Activated T-helper 1 cell treated with anti-CD3 and anti-CD28 coated beads, Interleukin-12 subunit alpha, Interleukin-12 subunit beta, Interleukin-2, Interleukin-4 antibody, amounts not matched to agents 30 ng/mL and 10 ng/mL and 1 ng/mL, durations not matched to agents 14 hours and 24 hours and 36 hours (primary cell): ENCODE measurements at regions of chr5 and their contacts with region 1.

Region 1: DNA sequence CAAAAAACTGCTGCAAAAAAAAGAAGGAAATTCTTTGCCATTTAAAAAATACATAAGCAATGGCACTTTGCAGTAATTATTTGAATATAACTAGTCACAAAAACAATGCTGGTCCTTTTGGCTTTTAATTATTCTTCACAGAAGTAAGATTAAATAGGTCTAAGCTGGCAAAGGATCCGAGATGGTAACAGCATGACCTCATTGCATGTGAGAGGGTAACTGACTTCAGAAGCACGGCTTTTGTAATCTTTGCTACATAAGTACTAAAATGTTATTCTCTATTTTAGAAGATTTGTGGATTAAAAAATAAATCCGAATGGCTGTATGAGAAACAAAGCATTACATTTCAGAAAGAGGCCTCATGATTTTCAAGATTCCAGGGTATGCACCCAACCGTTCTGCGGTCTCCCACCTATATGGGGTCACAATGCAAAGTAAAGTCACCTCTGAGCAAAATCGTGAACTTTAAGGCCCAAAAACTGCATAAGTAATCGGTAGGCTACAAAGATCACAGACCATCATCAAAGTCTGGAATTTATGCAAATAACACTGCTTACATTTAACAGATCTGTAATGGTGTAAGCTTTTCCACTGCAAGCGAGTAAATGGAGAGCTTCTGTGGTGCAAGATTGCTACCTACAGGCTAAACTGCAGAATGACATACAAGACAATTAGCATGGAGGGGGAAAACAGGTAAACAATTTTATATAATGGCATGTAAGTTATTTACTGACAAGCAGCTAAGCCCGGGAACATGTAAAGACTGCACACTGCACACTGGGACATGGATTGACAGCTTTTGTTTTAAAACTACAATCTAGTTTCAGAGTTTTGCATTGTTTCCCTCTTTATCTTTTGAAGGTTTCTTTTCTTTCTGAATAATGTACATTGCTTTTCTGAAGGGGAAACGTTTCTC is 231.6 kb downstream of the SLF1 start:
- DNase-seq: peak; percentile 32
- H3K4me3 Mint-ChIP-seq: no peak overlapping the region
- H3K27ac Mint-ChIP-seq: no peak overlapping the region
- H3K4me1 Mint-ChIP-seq: peaks cover 24% of the 10 kb centered on the region
- H3K27me3 Mint-ChIP-seq: no peaks in the 10 kb centered on the region

Region 2: DNA sequence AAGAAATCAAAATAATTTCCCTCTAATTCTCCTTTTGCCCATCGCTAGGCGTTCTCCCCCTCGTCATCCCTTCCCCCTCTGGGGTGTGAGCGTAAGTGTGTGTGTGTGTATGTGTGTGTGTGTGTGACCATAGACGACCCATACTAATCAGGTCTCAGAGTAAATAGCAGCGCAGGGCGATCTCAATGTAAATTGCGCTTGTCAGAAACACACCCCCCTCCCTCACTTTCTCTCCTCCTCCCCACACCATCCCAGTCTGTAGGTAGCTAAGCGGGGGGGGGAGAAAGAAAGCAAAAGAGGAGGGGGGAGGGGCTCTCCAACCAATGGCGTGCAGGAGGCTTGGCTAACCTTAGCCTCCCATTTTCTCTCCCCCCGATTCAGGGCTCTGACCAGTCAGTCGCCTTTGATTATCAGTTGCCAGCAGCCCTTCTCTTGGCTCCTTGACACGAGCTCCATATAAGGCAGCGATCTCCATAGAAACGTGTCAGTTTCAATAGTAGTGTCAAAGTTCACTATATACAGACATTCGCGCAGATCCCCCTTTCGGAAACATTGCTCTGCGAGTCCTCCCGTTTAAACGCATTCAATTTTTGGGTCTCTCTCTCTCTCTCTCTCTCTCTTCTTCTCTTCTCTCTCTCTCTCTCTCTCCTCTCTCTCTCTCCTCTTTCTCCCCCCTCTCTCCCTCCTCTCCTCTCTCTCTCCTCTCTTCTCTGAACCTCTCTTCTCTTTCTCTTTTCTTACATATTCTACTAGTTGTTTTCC is 1267.2 kb before region 1 on chr5 and contains the start of gene NR2F1:
- intact Hi-C with region 1: loop called (anchors 1 kb)
- DNase-seq: no peak
- H3K4me3 Mint-ChIP-seq: no peak within 1 kb of the TSS
- H3K27ac Mint-ChIP-seq: peak within 1 kb of the TSS; percentile 76
- H3K4me1 Mint-ChIP-seq: peaks cover 19% of the 10 kb centered on the region
- H3K27me3 Mint-ChIP-seq: peaks cover 53% of the 10 kb centered on the region
- total RNA-seq, gene NR2F1: not detected in 2 replicates

Region 3: DNA sequence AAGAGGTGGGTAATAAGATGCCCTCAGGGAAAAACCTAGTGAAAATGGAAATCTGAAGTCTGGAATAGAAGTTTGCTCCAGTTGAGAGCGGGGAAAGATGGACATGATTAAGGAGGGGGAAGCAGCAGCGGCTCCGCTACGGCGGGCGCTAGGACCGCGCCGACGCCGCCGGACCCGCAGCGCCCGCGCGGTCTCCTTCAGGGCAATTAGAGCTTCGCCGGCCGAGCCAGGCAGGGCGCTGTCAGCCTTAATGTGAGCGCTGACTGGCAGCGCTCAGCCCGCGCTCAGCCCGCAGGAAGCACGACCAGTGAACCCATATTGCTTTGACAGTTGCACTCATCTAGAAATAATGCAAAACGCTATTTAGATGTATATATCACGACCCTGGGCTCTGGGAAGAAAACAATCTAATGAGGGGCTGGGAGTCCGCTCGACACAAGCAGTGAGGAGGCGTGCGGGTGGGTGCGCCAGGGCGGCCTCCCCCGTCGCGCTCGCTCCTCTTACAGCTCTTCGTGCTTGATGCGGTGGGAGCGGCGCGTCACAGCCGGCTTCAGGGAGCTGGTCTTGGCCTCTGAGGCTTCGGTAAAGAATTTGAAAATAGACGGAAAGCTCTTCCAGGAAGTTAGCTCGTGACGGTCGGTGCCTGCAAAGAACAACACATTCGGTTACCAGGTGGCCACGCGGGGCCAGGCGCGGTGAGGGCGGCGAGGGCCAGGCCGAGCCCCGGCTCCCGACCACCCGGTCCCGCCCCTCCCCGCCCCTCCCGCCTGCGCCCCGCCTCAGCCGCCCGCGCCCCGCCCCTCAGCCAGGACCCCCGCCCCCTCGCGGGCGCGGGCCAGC is 1229.4 kb before region 1 on chr5:
- intact Hi-C with region 1: loop called (anchors 5 kb)
- DNase-seq: peak; percentile 25
- H3K4me3 Mint-ChIP-seq: peak overlapping the region; percentile 90
- H3K27ac Mint-ChIP-seq: peak overlapping the region; percentile 29
- H3K4me1 Mint-ChIP-seq: peaks cover 10% of the 10 kb centered on the region
- H3K27me3 Mint-ChIP-seq: peaks cover 44% of the 10 kb centered on the region

Region 4: DNA sequence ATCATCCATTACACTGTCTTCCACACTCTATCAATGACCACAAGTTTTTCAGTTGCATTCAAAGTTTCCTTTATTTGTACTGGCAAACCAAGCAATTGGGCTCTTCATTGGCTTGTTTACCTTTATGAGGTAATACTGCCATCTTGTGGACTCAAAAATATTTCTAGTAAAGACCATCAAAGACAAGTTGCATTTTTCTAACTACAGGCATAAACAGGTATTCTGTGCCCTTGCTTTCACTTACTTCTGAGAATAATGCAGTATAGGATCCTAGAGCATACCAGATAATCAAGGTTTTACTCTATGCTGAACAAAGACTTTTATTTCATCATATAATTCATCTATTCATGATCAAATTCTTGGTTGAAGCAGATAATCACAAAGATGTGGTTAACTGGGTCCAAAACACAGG is 934.9 kb before region 1 on chr5:
- intact Hi-C with region 1: loop called (anchors 1 kb)
- DNase-seq: no peak
- H3K4me3 Mint-ChIP-seq: no peak overlapping the region
- H3K27ac Mint-ChIP-seq: no peak overlapping the region
- H3K4me1 Mint-ChIP-seq: no peaks in the 10 kb centered on the region
- H3K27me3 Mint-ChIP-seq: no peaks in the 10 kb centered on the region

Region 5: GRCh38 chr5:94524841-94525697 is 325.0 kb before region 1 on chr5:
- intact Hi-C with region 1: loop called (anchors 1 kb)
- DNase-seq: peak; percentile 22
- H3K4me3 Mint-ChIP-seq: no peak overlapping the region
- H3K27ac Mint-ChIP-seq: no peak overlapping the region
- H3K4me1 Mint-ChIP-seq: peaks cover 9% of the 10 kb centered on the region
- H3K27me3 Mint-ChIP-seq: no peaks in the 10 kb centered on the region

Region 6: DNA sequence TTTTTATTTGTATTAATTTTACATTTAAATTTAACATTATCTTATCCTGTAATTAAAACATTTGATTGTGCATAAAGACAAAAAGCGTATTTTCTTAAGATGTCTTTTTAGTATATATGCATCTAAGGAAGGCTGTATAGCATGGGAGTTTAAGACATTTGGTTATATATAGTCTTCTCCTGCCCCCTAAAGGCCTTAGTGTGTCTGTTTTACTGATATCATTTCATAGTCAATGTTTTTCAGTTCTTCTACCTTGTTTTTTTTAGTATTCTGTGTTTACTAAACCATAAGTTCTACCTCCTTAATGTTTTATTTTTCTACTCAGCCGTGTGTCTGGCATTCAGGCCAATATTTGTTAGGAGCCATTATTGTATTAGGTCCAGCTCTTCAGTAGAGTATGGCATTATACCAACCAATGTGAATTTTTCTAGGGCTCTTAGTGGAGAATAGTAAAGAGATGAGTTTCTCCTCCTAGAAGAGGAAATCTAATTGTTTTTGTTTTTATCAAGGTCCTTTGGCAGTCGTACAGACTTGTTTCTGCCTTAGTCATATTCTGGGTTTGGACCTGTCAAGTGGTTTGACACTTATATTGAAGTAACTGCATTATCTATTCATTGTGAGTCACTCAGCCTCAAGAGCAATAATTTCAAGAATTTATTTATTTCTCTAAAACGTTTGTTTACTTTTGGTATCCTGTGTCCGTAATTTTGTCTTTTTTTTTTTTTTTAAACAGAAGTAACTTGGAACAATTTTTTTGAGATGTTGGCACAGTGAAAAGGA is 156.8 kb before region 1 on chr5:
- intact Hi-C with region 1: loop called (anchors 1 kb)
- DNase-seq: no peak
- H3K4me3 Mint-ChIP-seq: no peak overlapping the region
- H3K27ac Mint-ChIP-seq: no peak overlapping the region
- H3K4me1 Mint-ChIP-seq: peaks cover 6% of the 10 kb centered on the region
- H3K27me3 Mint-ChIP-seq: no peaks in the 10 kb centered on the region

Region 7: GRCh38 chr5:94740286-94740685 is 109.8 kb before region 1 on chr5:
- intact Hi-C with region 1: loop called (anchors 1 kb)
- DNase-seq: no peak
- H3K4me3 Mint-ChIP-seq: no peak overlapping the region
- H3K27ac Mint-ChIP-seq: no peak overlapping the region
- H3K4me1 Mint-ChIP-seq: no peaks in the 10 kb centered on the region
- H3K27me3 Mint-ChIP-seq: peaks cover 2% of the 10 kb centered on the region